ENCODE measurements at regions of chr11 and their contacts with region 1.

Region 1: DNA sequence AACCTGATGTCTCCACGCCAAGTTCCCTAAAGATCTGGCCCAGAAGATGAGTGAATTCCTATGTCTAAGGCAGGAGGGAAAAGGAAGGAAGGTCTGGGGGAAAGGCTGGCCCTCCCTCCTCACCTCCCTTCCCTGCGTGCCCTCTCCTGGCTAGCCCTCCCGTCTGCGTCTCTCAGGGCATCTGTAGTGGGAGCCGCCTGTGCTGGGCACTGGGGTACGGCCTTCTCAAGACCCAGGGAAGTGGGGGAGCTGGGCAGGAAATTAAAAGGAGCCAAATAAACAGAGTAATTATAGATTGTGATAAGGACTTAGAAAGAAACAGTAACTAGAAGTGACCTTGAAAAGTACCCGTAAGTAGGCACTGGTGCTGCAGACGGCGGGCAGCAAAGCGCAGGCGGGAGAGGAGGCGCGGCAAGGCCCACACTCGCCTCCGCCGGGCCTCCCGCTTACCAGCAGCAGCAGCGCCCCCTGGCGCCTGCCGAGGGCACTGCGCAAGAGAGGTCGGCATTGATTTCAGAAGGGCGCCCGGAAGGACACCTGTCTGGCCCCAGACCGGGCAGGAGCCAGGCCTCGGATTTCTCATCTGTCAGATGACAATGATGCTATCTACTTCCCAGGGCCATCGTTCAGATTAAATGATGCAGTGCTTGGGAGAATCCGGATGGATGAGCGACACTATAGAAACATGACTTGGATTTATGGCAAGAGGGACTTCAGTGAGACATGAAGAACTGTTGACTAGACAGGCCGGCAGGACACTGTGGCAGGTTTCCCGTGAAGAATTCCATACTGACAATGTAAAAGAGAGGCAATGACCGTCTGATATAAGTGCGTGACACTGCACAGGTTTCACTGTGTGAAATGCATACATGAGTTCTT is 7.3 kb downstream of the KCNJ1 start:
- DNase-seq: peak; percentile 89
- ATAC-seq: peak; percentile 96
- H3K4me3 Mint-ChIP-seq: no peak overlapping the region
- H3K27ac Mint-ChIP-seq: no peak overlapping the region
- H3K4me1 Mint-ChIP-seq: peaks cover 4% of the 10 kb centered on the region
- H3K27me3 Mint-ChIP-seq: no peaks in the 10 kb centered on the region

Region 2: DNA sequence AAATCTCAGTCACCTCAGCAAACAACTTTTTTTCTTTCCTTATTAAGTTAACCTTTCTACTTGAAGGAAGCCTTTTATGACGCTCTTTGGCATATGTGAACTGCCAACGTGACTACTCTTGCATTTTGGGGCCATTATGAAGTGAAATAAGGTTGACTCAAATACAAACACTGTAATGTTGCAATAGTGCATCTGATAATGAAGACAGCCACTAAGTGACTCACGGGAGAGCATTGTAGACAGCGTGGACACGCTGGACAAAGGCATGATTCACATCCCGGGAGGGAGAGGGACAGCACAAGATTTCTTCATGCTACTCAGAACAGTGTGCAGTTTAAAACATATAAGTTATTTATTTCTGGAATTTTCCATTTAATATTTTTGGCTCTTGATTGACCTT is 833.2 kb before region 1 on chr11:
- CTCF ChIA-PET with region 1: interaction called, 5 read pairs
- POLR2A ChIA-PET with region 1: no interaction called
- intact Hi-C with region 1: loop called (anchors 2 kb)
- DNase-seq: no peak
- ATAC-seq: no peak
- H3K4me3 Mint-ChIP-seq: no peak overlapping the region
- H3K27ac Mint-ChIP-seq: no peak overlapping the region
- H3K4me1 Mint-ChIP-seq: peaks cover 8% of the 10 kb centered on the region
- H3K27me3 Mint-ChIP-seq: no peaks in the 10 kb centered on the region

Region 3: GRCh38 chr11:128848815-128849455 is 10.9 kb before region 1 on chr11:
- CTCF ChIA-PET with region 1: interaction called, 11 read pairs
- POLR2A ChIA-PET with region 1: no interaction called
- intact Hi-C with region 1: no loop called
- DNase-seq: peak; percentile 84
- ATAC-seq: peak; percentile 85
- H3K4me3 Mint-ChIP-seq: no peak overlapping the region
- H3K27ac Mint-ChIP-seq: no peak overlapping the region
- H3K4me1 Mint-ChIP-seq: peaks cover 18% of the 10 kb centered on the region
- H3K27me3 Mint-ChIP-seq: no peaks in the 10 kb centered on the region